H1 (cell line): ENCODE measurements at regions of chr3 and their contacts with region 1.

Region 1: DNA sequence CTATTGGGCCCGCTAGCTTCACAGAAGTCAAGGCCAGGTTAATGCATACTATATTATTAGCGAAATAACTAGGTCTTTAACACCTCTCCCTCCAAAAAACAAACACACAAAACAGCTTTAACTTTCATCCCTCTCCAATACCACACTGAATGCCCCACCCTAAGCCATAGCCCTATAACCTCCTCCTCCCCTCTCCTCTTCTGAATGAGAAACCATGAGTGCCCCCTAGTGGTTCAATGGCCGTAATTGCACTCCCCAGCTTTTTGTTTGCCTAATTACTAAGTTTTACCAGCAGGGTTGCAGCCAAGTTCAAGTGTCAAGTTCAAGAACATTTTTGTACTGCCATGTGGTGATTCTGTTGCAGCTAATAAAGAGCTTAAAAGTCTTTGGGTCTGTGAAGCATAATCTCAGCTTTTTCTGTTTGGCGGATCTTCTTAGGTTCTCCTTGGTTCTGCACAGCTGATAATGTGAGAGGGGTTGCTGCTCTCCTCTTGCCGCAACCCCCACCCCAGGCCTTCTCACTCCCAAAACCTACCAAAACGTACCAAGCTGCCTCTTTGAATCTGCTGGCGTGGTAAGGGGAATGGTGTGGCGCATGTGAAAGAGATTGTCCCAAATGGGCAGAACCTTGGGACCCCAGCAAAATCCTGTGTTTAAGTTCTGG is 57.9 kb downstream of the RPL22L1 start:
- DNase-seq: peak; percentile 59 to 78
- H3K4me3 ChIP-seq: no peak overlapping the region
- H3K27ac ChIP-seq: no peak overlapping the region
- H3K4me1 ChIP-seq: peaks cover 4 to 19% (median 9%) of the 10 kb centered on the region in 4 experiments; a peak in 5 of 7 replicates
- H3K27me3 ChIP-seq: no peaks in the 10 kb centered on the region
- CTCF ChIP-seq: peak in 2 of 3 experiments; percentile 92 to 96; a peak in 3 of 4 replicates
- EP300 ChIP-seq: no peak
- POLR2A ChIP-seq: no peak
- RAD21 ChIP-seq: peak; percentile 88 to 94

Region 2: DNA sequence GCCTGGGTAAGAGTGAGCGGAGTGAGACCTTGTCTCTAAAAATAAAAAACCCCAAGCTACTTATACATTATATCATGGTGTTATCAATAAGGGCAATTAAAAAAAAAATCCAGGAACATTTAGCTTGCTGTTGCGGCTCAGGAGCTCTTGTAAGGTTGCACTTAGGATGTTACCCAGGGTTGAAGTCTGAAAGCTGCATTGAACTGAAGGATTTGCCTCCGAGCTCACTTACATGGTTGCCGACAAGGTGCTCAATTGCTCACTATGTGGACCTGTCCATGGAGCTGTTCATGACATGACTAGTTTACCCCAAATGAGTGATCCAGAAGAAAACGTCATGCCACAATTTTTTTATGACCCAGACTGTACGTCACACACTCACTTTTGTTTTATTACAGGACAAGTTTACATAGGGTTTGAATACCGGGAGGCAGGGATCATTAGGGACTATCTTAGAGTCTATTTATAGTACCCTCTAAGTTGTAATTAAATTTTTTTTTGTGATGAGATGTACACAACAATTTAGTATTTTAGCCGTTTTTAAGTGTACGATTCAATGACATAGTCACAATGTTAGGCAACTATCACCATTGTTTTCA is 414.4 kb before region 1 on chr3:
- CTCF ChIA-PET with region 1: interaction called, 17 read pairs
- POLR2A ChIA-PET with region 1: no interaction called
- DNase-seq: no peak
- H3K4me3 ChIP-seq: no peak overlapping the region
- H3K27ac ChIP-seq: no peak overlapping the region
- H3K4me1 ChIP-seq: no peaks in the 10 kb centered on the region
- H3K27me3 ChIP-seq: no peaks in the 10 kb centered on the region
- CTCF ChIP-seq: no peak
- EP300 ChIP-seq: no peak
- POLR2A ChIP-seq: no peak
- RAD21 ChIP-seq: no peak

Region 3: GRCh38 chr3:170431054-170431453 is 381.0 kb before region 1 on chr3:
- CTCF ChIA-PET with region 1: interaction called, 14 read pairs
- POLR2A ChIA-PET with region 1: no interaction called
- DNase-seq: no peak
- H3K4me3 ChIP-seq: no peak overlapping the region
- H3K27ac ChIP-seq: no peak overlapping the region
- H3K4me1 ChIP-seq: no peaks in the 10 kb centered on the region; a peak in 1 of 7 replicates
- H3K27me3 ChIP-seq: no peaks in the 10 kb centered on the region
- CTCF ChIP-seq: no peak
- EP300 ChIP-seq: no peak
- POLR2A ChIP-seq: no peak
- RAD21 ChIP-seq: no peak; a peak in 1 of 4 replicates

Region 4: DNA sequence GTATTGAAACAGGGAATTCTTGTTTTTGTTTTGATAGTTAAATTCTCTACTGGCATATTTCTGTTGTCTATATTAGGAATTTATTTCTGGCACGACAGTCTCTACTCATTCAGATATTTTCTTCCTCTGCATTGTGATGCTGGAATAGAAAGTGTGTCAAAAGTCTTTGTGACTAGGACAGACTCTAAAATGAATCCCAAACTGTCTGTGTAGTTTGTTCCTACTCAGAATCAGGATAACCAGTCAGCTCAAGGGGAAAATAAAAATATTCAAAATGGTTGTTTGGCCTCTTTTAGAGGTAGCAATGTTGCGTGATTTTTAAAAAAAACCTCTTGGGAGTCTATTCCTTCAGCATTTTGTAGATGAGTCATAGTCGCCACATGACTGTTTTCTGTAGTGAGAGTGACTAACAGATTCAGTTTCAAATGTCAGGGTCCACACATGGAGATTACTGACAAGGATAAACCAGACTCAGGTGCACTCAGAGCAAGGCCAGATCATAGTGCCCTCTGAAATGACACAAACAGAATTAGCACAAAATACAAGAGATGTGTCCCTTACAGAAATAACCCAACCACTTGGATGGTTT is 239.3 kb before region 1 on chr3:
- CTCF ChIA-PET with region 1: interaction called, 18 read pairs
- POLR2A ChIA-PET with region 1: no interaction called
- DNase-seq: no peak
- H3K4me3 ChIP-seq: no peak overlapping the region
- H3K27ac ChIP-seq: no peak overlapping the region
- H3K4me1 ChIP-seq: no peaks in the 10 kb centered on the region
- H3K27me3 ChIP-seq: no peaks in the 10 kb centered on the region
- CTCF ChIP-seq: no peak
- EP300 ChIP-seq: no peak
- POLR2A ChIP-seq: no peak
- RAD21 ChIP-seq: no peak

Region 5: DNA sequence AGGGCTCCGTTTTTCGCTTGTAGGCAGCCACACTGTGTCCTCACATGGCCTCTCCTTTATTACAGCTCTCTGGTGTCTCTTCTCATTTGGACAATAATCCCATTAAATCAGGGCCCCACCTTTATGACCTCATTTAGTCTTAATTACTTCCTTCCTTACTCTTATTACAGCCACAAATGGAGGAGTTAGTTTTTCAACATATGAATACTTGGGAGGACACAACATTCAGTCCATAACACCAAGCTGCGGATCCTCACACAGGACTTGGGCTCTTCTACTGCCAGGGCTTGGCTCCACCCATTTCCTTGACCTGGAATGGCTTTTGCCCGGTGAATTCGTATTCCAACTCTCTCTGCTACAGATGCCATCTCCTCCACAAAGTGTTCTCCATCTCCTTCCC is 151.9 kb before region 1 on chr3:
- CTCF ChIA-PET with region 1: no interaction called
- POLR2A ChIA-PET with region 1: no interaction called
- DNase-seq: no peak
- H3K4me3 ChIP-seq: no peak overlapping the region
- H3K27ac ChIP-seq: no peak overlapping the region
- H3K4me1 ChIP-seq: no peaks in the 10 kb centered on the region
- H3K27me3 ChIP-seq: no peaks in the 10 kb centered on the region
- CTCF ChIP-seq: no peak
- EP300 ChIP-seq: no peak
- POLR2A ChIP-seq: no peak
- RAD21 ChIP-seq: no peak

Region 6: DNA sequence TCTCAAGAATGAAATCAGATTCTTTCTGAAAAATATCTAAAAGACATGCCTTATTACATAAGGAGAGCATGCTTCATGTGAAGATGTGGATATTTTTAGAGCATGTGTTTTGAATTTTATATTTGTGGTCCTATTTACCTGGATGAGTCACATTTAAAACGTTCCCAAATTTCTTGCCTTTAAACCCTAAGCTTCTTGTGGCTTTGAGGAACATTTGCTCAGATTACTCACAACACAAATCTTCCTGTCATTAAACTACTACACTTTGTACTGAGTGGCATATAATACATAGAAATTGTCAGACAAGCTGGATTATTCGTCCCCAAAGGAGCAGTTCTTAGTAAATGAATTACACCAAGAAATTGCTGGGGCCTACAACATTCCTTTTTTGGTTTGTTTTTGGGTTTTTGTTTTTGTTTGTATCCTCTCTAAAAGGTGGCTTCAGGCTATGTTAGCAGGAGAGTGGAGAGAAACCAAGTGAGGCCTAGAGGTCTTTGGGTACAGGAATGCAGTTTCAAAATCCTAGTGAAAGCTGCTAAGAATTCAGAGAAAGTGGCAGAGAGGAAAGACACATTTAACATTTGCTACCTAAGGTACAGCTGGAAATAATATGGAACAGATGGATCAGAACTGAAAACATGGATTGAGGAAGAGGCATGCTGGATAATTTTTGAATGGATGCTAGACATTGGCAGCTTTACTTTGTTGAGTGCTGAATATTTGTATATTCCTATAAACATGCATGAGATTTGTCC is 70.1 kb before region 1 on chr3:
- CTCF ChIA-PET with region 1: interaction called, 11 read pairs
- POLR2A ChIA-PET with region 1: no interaction called
- DNase-seq: no peak
- H3K4me3 ChIP-seq: no peak overlapping the region
- H3K27ac ChIP-seq: no peak overlapping the region
- H3K4me1 ChIP-seq: no peaks in the 10 kb centered on the region
- H3K27me3 ChIP-seq: no peaks in the 10 kb centered on the region
- CTCF ChIP-seq: no peak
- EP300 ChIP-seq: no peak
- POLR2A ChIP-seq: no peak
- RAD21 ChIP-seq: no peak

Region 7: DNA sequence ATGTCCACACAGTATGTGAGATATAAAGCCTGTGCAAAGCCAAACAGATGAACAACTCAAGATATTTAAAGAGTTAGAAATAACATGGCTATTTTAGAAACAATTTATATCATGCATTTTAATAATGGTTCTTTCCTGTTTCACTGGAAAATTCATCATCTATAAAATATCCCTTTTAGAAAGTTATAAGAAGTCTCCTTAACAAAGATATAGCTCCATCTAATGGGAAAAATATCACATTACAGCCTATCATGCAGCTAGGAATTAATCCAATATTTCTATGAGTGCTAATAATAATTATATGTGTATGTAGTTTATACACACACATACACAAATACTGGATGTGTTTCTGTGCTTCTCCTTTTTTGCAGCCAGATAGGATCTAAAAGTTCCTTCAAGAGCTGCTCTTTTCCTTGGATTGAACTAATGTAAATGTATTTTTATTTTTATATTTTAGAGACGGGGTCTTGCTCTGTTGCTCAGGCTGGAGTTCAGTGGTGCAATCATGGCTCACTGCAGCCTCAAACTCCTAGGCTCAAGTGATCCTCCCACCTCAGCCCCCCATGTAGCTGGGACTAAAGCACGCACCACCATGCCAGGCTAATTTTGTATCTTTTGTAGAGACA is 36.3 kb after region 1 on chr3:
- CTCF ChIA-PET with region 1: interaction called, 28 read pairs
- POLR2A ChIA-PET with region 1: no interaction called
- DNase-seq: no peak
- H3K4me3 ChIP-seq: no peak overlapping the region
- H3K27ac ChIP-seq: no peak overlapping the region
- H3K4me1 ChIP-seq: no peaks in the 10 kb centered on the region
- H3K27me3 ChIP-seq: no peaks in the 10 kb centered on the region
- CTCF ChIP-seq: no peak
- EP300 ChIP-seq: no peak
- POLR2A ChIP-seq: no peak
- RAD21 ChIP-seq: peak in 1 of 2 experiments; percentile 24; a peak in 2 of 4 replicates

Region 8: DNA sequence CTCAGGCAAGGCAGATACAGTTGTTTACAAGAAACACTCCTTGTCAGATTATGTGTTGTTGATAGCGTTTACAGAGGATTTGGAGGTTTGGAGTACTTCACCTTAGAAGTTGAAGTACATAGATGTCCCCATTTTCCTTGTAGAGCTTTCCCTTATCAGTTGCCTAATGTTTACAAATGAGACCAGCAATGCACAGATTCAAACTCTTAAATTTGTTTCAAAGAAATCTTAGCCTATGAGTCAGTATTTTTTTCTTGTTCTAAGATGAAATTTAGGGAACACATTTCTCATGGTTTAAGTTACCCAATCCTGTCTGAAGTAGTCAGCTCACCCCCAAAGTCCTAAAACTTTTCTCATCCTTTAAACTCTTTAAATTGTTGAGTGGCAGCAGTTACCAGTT is 102.6 kb after region 1 on chr3:
- CTCF ChIA-PET with region 1: no interaction called
- POLR2A ChIA-PET with region 1: no interaction called
- DNase-seq: no peak
- H3K4me3 ChIP-seq: no peak overlapping the region
- H3K27ac ChIP-seq: no peak overlapping the region
- H3K4me1 ChIP-seq: no peaks in the 10 kb centered on the region
- H3K27me3 ChIP-seq: peaks cover 0 to 1% (median 0%) of the 10 kb centered on the region in 4 experiments; a peak in 2 of 7 replicates
- CTCF ChIP-seq: no peak
- EP300 ChIP-seq: no peak
- POLR2A ChIP-seq: no peak
- RAD21 ChIP-seq: no peak